CD14-positive monocyte (primary cell): ENCODE measurements at regions of chr7 and their contacts with region 1.

Region 1: GRCh38 chr7:26237035-26237807 is 35.7 kb downstream of the CBX3 start:
- DNase-seq: peak in 1 of 3 donors; percentile 36
- H3K4me3 ChIP-seq: no peak overlapping the region
- H3K4me3 Mint-ChIP-seq: no peak overlapping the region
- H3K27ac ChIP-seq: no peak overlapping the region
- H3K27ac Mint-ChIP-seq: no peak overlapping the region
- H3K4me1 ChIP-seq: peaks cover 5 to 11% of the 10 kb centered on the region in 2 donors
- H3K4me1 Mint-ChIP-seq: peaks cover 30% of the 10 kb centered on the region
- H3K27me3 ChIP-seq: no peaks in the 10 kb centered on the region
- H3K27me3 Mint-ChIP-seq: peaks cover 0 to 8% (median 0%) of the 10 kb centered on the region in 3 donors
- CTCF ChIP-seq: no peak

Region 2: GRCh38 chr7:26278770-26279169 is 41.5 kb after region 1 on chr7:
- intact Hi-C with region 1: loop called in 1 of 2 experiments (anchors 5 kb)
- DNase-seq: peak in 2 of 3 donors; percentile 39 to 43
- H3K4me3 ChIP-seq: peak overlapping the region in 1 of 3 experiments; percentile 44
- H3K4me3 Mint-ChIP-seq: no peak overlapping the region
- H3K27ac ChIP-seq: peak overlapping the region in 1 of 2 donors; percentile 67
- H3K27ac Mint-ChIP-seq: peak overlapping the region in 4 of 7 donors; percentile 30 to 76 (median 51)
- H3K4me1 ChIP-seq: peaks cover 30 to 34% of the 10 kb centered on the region in 2 donors
- H3K4me1 Mint-ChIP-seq: peaks cover 30% of the 10 kb centered on the region
- H3K27me3 ChIP-seq: no peaks in the 10 kb centered on the region
- H3K27me3 Mint-ChIP-seq: peaks cover 0 to 3% (median 0%) of the 10 kb centered on the region in 3 donors
- CTCF ChIP-seq: peak; percentile 70